ENCODE measurements at regions of chr15 and their contacts with region 1.

Region 1: DNA sequence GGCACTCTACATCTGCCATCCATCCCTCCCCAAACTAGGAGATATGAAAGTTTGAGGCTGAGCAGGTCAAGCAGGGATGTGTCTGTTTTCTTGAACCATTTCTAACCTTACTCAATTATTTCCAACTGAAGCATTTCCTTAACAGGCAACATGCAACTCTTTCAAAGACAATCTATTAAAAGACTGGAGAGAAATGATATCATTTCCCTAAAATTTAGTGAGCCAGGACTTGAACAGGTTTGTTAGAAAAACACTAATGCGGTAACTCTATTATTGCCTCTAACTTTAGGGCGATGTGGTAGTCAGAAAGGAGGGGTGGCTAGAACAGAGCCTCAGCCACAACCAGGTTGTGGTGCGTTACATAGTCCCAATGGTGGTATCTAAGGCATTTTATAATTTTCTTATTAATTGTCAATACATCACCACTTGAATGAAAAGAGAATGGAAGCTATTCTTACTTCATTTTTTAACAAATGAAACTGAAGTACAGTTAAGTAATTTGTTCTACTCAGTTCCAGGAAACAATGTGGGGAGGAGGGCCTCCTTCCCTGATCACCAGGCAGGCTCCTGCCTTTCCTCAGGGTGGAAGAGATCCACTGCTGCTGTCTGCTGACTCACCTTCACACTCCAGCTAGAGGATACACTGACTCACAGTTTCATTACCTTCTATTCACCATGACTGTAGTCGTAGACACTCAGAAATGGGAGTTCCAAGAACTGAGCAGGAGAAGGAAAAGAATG is 22.8 kb downstream of the MYO1E start:
- DNase-seq: peak in 3 of 5 donors; percentile 25 to 63 (median 26)
- ATAC-seq: peak; percentile 66 to 92 (median 90)
- H3K4me3 ChIP-seq: no peak overlapping the region
- H3K27ac ChIP-seq: peak overlapping the region in 11 of 12 donors; percentile 24 to 85 (median 50)
- H3K4me1 ChIP-seq: peaks cover 0 to 67% (median 34%) of the 10 kb centered on the region in 12 donors
- H3K27me3 ChIP-seq: no peaks in the 10 kb centered on the region
- CTCF ChIP-seq: no peak
- POLR2A ChIP-seq: no peak

Region 2: DNA sequence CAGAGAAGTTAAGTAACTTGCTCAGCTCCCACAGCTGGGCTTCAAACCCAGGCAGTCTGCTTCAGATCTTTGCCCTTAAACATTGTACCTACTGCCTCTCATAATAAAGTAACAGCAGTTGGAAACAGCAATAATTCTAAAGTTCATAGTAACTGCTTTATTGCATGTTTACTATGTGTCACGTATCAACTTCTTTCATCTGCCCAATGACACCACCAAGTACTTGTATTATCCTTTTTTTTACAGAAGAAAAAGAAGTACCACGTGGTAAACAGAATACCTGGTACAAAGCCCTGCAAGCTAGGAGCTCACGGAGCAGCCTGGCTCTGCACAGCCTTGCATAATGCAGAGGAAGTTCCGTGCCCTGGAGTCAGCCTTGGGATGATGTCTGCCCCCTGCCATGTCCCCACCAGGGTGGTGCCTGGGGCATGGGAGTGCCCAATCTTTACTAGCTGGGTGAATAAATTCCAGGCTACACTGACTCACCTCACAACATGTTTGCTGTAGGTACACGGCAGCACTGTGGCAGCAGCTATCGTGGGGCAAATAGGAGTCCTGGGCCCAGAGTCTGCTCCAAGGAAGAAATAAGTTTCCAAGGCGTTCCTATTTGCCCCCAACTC is 66.0 kb before region 1 on chr15:
- intact Hi-C with region 1: loop called in 1 of 10 experiments (anchors 10 kb)
- DNase-seq: no peak
- ATAC-seq: peak in 1 of 4 donors; percentile 32
- H3K4me3 ChIP-seq: no peak overlapping the region
- H3K27ac ChIP-seq: no peak overlapping the region
- H3K4me1 ChIP-seq: peaks cover 0 to 8% (median 1%) of the 10 kb centered on the region in 12 donors
- H3K27me3 ChIP-seq: no peaks in the 10 kb centered on the region
- CTCF ChIP-seq: no peak
- POLR2A ChIP-seq: no peak

Region 3: GRCh38 chr15:59294568-59295260 is 55.1 kb before region 1 on chr15:
- intact Hi-C with region 1: loop called in 5 of 10 experiments (anchors 5 to 10 kb)
- DNase-seq: no peak
- ATAC-seq: no peak
- H3K4me3 ChIP-seq: no peak overlapping the region
- H3K27ac ChIP-seq: peak overlapping the region in 11 of 12 donors; percentile 7 to 81 (median 51)
- H3K4me1 ChIP-seq: peaks cover 3 to 74% (median 34%) of the 10 kb centered on the region in 12 donors
- H3K27me3 ChIP-seq: no peaks in the 10 kb centered on the region
- CTCF ChIP-seq: no peak
- POLR2A ChIP-seq: no peak

Region 4: DNA sequence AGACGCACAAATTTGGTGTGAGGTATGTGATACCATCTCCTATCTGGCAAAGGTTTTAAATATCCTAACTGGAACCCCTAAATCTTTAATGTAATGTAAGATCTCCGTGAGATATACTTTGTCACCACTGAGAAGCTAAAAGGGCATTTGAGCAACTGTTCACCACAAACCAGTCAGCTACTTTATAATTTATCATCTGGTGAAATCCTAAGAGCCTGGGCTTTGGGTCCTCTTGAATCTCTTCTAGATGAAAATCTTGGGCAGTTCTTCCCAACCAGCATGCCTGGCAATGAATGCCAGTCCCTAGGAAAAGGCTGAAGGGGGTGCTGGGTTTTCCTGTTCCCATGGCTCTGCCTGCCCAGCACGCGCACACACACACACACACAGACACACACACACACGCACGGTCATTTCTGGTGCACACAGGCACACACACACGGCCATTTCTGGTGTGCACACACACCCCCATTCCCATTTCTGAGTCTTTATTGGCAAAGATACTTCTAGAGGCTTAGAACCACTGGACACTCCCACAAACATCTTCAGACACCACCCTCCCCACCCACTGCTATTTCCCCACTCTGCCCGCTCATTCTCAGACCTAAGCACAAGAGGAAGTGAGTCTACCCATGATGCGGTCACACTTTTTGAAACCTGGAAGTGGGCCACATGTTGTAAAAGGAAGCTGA is 49.8 kb before region 1 on chr15:
- intact Hi-C with region 1: loop called in 3 of 10 experiments (anchors 5 to 10 kb)
- DNase-seq: peak in 4 of 5 donors; percentile 65 to 77 (median 69)
- ATAC-seq: peak; percentile 53 to 97 (median 94)
- H3K4me3 ChIP-seq: peak overlapping the region in 4 of 12 donors; percentile 0 to 23 (median 10)
- H3K27ac ChIP-seq: peak overlapping the region in 9 of 12 donors; percentile 4 to 82 (median 24)
- H3K4me1 ChIP-seq: peaks cover 0 to 57% (median 21%) of the 10 kb centered on the region in 12 donors
- H3K27me3 ChIP-seq: no peaks in the 10 kb centered on the region
- CTCF ChIP-seq: no peak
- POLR2A ChIP-seq: no peak

Region 5: DNA sequence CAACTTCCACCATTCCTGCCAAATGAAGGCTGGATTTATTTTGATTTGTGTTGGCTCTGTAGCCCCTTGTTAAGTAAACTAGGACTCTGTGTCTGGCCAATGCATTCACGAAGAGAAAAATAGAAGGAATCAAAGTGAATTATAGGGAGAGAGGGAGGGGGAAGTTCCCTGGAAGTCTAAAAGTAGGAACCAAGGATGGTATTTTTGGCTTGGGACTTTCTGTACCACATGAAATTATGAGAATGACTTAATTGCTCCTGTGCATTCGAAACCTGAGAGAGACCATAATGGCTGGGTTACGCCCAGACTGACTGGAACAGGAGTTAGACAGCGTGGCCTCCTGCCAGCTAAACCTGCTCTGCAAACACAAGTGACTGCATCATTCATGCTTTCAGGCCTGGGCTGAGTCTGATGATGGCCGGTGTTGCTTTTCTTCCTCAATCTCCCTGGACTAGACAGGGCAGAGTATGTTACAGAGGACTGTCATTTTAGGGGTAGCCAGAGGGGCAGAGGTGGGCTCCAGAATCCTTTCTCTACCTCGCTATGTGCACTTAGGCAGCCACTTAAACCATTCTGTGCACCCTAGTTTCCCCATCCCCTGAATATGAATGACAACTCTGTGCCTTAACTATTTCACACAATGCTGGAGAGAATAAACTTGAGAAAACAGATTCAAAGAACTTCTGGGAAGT is 36.1 kb before region 1 on chr15:
- intact Hi-C with region 1: loop called in 1 of 10 experiments (anchors 5 kb)
- DNase-seq: peak; percentile 54 to 82 (median 77)
- ATAC-seq: peak; percentile 66 to 88 (median 80)
- H3K4me3 ChIP-seq: no peak overlapping the region
- H3K27ac ChIP-seq: peak overlapping the region in 5 of 12 donors; percentile 4 to 39 (median 21)
- H3K4me1 ChIP-seq: peaks cover 0 to 53% (median 30%) of the 10 kb centered on the region in 12 donors
- H3K27me3 ChIP-seq: no peaks in the 10 kb centered on the region
- CTCF ChIP-seq: no peak
- POLR2A ChIP-seq: no peak

Region 6: GRCh38 chr15:59399465-59400102 is 49.7 kb after region 1 on chr15:
- intact Hi-C with region 1: no loop called
- DNase-seq: peak in 1 of 5 donors; percentile 18
- ATAC-seq: peak in 2 of 4 donors; percentile 44 to 66
- H3K4me3 ChIP-seq: no peak overlapping the region
- H3K27ac ChIP-seq: peak overlapping the region in 1 of 12 donors; percentile 50
- H3K4me1 ChIP-seq: peaks cover 0 to 34% (median 0%) of the 10 kb centered on the region in 12 donors
- H3K27me3 ChIP-seq: peaks cover 0 to 3% (median 0%) of the 10 kb centered on the region in 9 donors
- CTCF ChIP-seq: no peak
- POLR2A ChIP-seq: no peak

Measured in heart left ventricle (tissue), 16 donors.